Activated T-helper 1 cell treated with anti-CD3 and anti-CD28 coated beads, Interleukin-12 subunit alpha, Interleukin-12 subunit beta, Interleukin-2, Interleukin-4 antibody, amounts not matched to agents 30 ng/mL and 10 ng/mL and 1 ng/mL, durations not matched to agents 14 hours and 24 hours and 36 hours (primary cell): ENCODE measurements at regions of chr22 and their contacts with region 1.

Region 1: GRCh38 chr22:17057959-17058814 is 26.6 kb upstream of the IL17RA start:
- DNase-seq: peak; percentile 10
- H3K4me3 Mint-ChIP-seq: no peak overlapping the region
- H3K27ac Mint-ChIP-seq: no peak overlapping the region
- H3K4me1 Mint-ChIP-seq: peaks cover 1% of the 10 kb centered on the region
- H3K27me3 Mint-ChIP-seq: peaks cover 14% of the 10 kb centered on the region

Region 2: DNA sequence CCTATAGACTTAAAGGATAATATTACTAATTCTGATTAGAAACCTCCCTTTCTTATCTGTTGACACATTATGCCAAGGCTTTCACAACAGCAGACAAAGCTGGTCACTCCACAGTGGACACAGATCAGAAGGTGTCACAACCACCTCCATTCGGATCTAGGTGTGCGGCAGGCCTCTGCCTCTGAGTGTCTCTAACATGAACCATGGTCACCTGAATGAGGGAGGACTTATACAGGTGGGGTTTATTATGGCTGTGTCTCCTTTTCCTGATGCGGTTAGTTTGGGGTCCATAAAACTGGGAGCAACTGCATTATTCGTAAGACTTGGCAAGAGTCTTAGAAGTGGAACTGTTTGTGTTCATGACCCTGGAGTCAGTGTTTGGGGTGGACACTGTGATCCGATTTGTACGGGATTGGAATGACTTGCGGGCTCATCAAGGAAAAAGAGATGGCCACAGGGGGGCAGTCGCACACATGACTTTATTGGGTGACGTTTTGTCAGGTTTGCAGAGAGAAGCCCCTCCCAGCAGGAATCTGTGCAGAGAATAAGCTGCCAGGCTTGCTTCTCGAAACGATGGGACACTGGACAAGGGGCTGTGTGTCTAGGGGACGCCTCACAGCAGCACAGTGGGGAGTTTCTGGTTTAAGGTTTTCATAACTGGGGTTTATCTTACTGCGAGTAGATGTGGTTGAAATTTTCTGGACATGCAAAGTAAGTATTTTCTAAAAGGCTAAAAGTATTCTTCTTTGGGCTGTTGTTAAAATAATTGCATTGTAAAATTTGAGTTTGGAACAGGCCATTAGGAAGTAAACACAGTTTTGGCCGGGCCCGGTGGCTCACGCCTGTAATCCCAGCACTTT is 140.8 kb before region 1 on chr22:
- intact Hi-C with region 1: loop called (anchors 1 kb)
- DNase-seq: peak; percentile 13
- H3K4me3 Mint-ChIP-seq: no peak overlapping the region
- H3K27ac Mint-ChIP-seq: no peak overlapping the region
- H3K4me1 Mint-ChIP-seq: peaks cover 8% of the 10 kb centered on the region
- H3K27me3 Mint-ChIP-seq: peaks cover 12% of the 10 kb centered on the region

Region 3: GRCh38 chr22:17381237-17381914 is 323.2 kb after region 1 on chr22:
- intact Hi-C with region 1: no loop called
- DNase-seq: no peak
- H3K4me3 Mint-ChIP-seq: no peak overlapping the region
- H3K27ac Mint-ChIP-seq: no peak overlapping the region
- H3K4me1 Mint-ChIP-seq: peaks cover 11% of the 10 kb centered on the region
- H3K27me3 Mint-ChIP-seq: peaks cover 10% of the 10 kb centered on the region